Activated T-helper 2 cell treated with anti-CD3 and anti-CD28 coated beads, Interferon-gamma antibody, Interleukin-2, Interleukin-4, amounts not matched to agents 10 μg/mL and 5 μg/mL and 100 μg/mL, durations not matched to agents 14 hours and 24 hours and 36 hours (primary cell): ENCODE measurements at regions of chr12 and their contacts with region 1.

Region 1: GRCh38 chr12:9750276-9751203 is 10.2 kb downstream of the CD69 start:
- DNase-seq: peak; percentile 46
- H3K4me3 Mint-ChIP-seq: no peak overlapping the region
- H3K27ac Mint-ChIP-seq: peak overlapping the region; percentile 44
- H3K4me1 Mint-ChIP-seq: peaks cover 48% of the 10 kb centered on the region
- H3K27me3 Mint-ChIP-seq: peaks cover 1% of the 10 kb centered on the region

Region 2: GRCh38 chr12:9647825-9648700 is 102.5 kb before region 1 on chr12:
- intact Hi-C with region 1: no loop called
- DNase-seq: peak; percentile 95
- H3K4me3 Mint-ChIP-seq: peak overlapping the region; percentile 94
- H3K27ac Mint-ChIP-seq: peak overlapping the region; percentile 96
- H3K4me1 Mint-ChIP-seq: peaks cover 46% of the 10 kb centered on the region
- H3K27me3 Mint-ChIP-seq: no peaks in the 10 kb centered on the region

Region 3: GRCh38 chr12:9760699-9761418 is 10.3 kb after region 1 on chr12 and contains the start of gene CD69:
- intact Hi-C with region 1: loop called (anchors 1 kb)
- DNase-seq: peak; percentile 83
- H3K4me3 Mint-ChIP-seq: peak within 1 kb of the TSS; percentile 99
- H3K27ac Mint-ChIP-seq: peak within 1 kb of the TSS; percentile 96
- H3K4me1 Mint-ChIP-seq: peaks cover 48% of the 10 kb centered on the region
- H3K27me3 Mint-ChIP-seq: no peaks in the 10 kb centered on the region
- total RNA-seq, gene CD69: 70.9 and 72.2 TPM in 2 replicates

Region 4: DNA sequence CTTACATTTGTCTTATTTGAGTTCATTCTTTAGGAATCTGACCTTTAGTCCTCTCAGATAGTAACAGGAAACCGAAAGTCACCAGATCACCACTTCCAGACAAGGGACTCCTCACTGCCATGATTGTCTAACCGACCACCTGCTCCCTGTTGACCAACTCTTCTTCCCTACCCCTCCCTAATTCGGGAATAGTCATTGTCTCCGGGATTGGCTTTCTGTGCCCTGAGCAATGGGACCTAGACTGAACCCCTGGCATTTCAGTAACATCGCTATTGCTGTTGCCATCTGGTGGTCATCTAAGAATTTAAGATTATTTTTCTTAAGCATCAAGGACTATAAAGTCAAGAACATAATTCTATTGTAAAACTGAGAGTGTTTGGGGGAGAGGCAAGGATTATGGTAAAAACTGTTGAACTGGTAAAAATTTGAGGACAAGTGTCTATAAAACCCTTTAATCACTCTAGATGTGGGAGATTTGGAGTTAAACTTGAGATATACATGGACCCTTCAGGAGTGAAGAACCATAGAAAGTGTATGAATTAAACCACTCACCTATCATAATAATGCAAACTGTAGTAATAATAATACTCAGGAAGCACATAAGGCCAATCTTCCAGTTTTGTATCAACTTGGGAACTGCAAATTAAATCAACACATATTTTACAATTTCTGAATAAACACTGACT is 175.3 kb after region 1 on chr12:
- intact Hi-C with region 1: loop called (anchors 1 kb)
- DNase-seq: no peak
- H3K4me3 Mint-ChIP-seq: peak overlapping the region; percentile 34
- H3K27ac Mint-ChIP-seq: no peak overlapping the region
- H3K4me1 Mint-ChIP-seq: peaks cover 22% of the 10 kb centered on the region
- H3K27me3 Mint-ChIP-seq: peaks cover 28% of the 10 kb centered on the region

Region 5: DNA sequence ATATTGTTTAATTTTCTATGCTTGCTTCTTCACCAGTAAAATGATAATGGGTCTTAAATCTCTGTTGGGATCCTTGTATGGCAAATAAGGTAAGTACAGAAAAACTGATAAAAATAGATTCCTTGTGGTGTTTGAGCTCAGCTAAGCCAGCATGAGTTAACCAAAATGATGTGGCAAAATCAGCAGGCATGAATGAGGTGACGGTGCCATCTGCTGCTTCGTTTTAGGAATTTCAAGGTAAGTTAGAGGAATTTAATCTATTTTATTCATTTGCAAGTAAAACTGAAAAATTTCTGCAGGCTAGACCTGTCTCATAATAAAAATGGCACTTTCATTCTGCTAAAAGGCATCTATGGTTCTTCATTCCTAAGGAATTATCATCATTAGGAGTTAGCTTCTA is 389.5 kb after region 1 on chr12:
- intact Hi-C with region 1: loop called (anchors 1 kb)
- DNase-seq: peak; percentile 16
- H3K4me3 Mint-ChIP-seq: no peak overlapping the region
- H3K27ac Mint-ChIP-seq: no peak overlapping the region
- H3K4me1 Mint-ChIP-seq: no peaks in the 10 kb centered on the region
- H3K27me3 Mint-ChIP-seq: peaks cover 37% of the 10 kb centered on the region